HEK293T (cell line): ENCODE measurements at regions of chr17 and their contacts with region 1.

Region 1: DNA sequence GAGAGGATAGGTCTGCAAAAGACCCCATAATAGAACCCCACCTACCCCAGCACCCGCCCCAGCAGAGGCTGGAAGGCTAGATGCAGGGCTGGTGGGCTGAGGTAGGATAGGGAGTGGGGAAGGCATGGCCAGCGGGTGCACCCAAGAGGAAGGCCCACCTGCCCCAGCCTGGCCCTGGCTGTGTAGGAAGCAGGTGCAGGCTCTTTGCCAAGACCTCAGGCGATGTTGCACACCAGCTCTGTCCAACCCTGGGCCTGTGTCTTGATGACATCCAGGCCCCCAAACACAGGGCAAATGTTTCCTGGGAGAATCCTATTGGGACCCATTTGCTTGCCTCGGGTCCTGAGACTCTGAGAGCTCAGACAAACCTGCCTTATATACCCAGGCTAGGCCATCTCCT is 12.2 kb downstream of the UNC119 start:
- DNase-seq: no peak

Region 2: GRCh38 chr17:28494445-28495188 is 45.6 kb before region 1 on chr17:
- CTCF ChIA-PET with region 1: interaction called, 14 read pairs
- POLR2A ChIA-PET with region 1: interaction called, 3 read pairs
- DNase-seq: peak; percentile 78